ENCODE measurements at regions of chr17 and their contacts with region 1.

Region 1: DNA sequence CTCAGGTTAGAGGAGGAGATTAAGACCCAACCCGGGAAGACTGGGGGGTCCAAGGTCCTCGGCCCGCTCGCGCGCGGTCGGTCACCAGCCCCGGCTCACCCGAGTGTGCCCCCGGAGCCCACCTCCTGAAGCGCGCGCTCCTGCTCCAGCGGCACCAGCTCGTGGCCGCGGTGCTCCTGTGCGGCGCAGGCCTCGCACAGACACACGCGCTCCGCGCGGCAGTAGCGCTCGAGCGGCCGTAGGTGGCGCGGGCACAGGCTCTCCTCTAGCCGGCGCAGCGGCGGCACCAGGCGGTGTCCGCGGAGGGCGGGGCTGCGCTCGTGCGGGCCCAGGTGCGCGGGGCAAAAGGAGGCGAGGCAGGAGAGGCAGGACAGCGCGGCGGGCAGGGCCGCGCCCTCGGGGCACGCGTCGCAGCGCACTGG is 618 bp downstream of the TRIM47 start:
- DNase-seq: peak; percentile 51 to 81 (median 66)
- ATAC-seq: peak; percentile 71
- H3K4me3 Mint-ChIP-seq: peak overlapping the region; percentile 80 to 92 (median 87)
- H3K27ac Mint-ChIP-seq: peak overlapping the region; percentile 65 to 96 (median 92)
- H3K4me1 Mint-ChIP-seq: peaks cover 25 to 57% (median 53%) of the 10 kb centered on the region in 4 donors
- H3K27me3 Mint-ChIP-seq: peaks cover 0 to 2% (median 0%) of the 10 kb centered on the region in 5 donors

Region 2: DNA sequence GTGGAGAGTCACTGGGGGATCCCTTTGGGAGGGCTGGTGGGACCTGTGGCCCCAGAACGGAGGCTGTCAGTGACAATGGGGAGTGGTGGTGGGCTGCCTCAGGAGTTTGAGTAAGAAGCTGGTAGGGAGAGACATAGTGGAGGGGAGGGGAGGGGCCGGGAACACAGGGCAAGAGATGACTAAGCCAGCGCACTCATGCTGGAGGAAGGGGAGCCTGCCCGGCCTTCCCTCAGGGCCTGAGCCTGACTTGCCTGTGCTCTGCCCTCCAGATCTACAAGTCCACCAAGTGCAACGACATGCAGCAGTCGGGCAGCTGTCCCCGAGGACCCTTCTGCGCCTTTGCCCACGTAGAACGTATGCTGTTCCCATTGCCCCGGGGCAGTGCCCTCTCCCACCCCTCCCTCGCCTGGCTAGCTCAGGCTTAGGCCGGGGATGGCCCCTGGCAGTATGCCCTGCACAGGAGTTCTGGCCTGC is 62.8 kb before region 1 on chr17:
- POLR2A ChIA-PET with region 1: no interaction called
- DNase-seq: no peak
- ATAC-seq: no peak
- H3K4me3 Mint-ChIP-seq: no peak overlapping the region
- H3K27ac Mint-ChIP-seq: peak overlapping the region in 2 of 10 donors; percentile 55 to 81
- H3K4me1 Mint-ChIP-seq: peaks cover 0 to 2% (median 0%) of the 10 kb centered on the region in 4 donors
- H3K27me3 Mint-ChIP-seq: no peaks in the 10 kb centered on the region

Region 3: GRCh38 chr17:75889454-75889853 is 11.7 kb after region 1 on chr17:
- POLR2A ChIA-PET with region 1: interaction called, 192 read pairs
- DNase-seq: no peak
- ATAC-seq: peak in 1 of 2 donors; percentile 30
- H3K4me3 Mint-ChIP-seq: no peak overlapping the region
- H3K27ac Mint-ChIP-seq: peak overlapping the region in 2 of 10 donors; percentile 33 to 56
- H3K4me1 Mint-ChIP-seq: peaks cover 8 to 11% (median 10%) of the 10 kb centered on the region in 4 donors
- H3K27me3 Mint-ChIP-seq: no peaks in the 10 kb centered on the region

Region 4: GRCh38 chr17:75896415-75897159 is 18.8 kb after region 1 on chr17 and contains the start of gene TRIM65:
- POLR2A ChIA-PET with region 1: interaction called, 192 read pairs
- DNase-seq: peak; percentile 56 to 84 (median 76)
- ATAC-seq: peak; percentile 84 to 87
- H3K4me3 Mint-ChIP-seq: peak within 1 kb of the TSS; percentile 75 to 87 (median 82)
- H3K27ac Mint-ChIP-seq: peak within 1 kb of the TSS; percentile 77 to 92 (median 86)
- H3K4me1 Mint-ChIP-seq: peaks cover 19 to 28% (median 26%) of the 10 kb centered on the region in 4 donors
- H3K27me3 Mint-ChIP-seq: no peaks in the 10 kb centered on the region
- polyA plus RNA-seq, gene TRIM65: 13.4 to 31.8 (median 18.9) TPM

Region 5: GRCh38 chr17:75904749-75905521 is 27.2 kb after region 1 on chr17 and contains the start of gene MRPL38:
- POLR2A ChIA-PET with region 1: interaction called, 192 read pairs
- DNase-seq: peak; percentile 87 to 96 (median 92)
- ATAC-seq: peak; percentile 95 to 97
- H3K4me3 Mint-ChIP-seq: peak within 1 kb of the TSS; percentile 83 to 94 (median 90)
- H3K27ac Mint-ChIP-seq: peak within 1 kb of the TSS; percentile 85 to 97 (median 95)
- H3K4me1 Mint-ChIP-seq: peaks cover 9 to 29% (median 21%) of the 10 kb centered on the region in 4 donors
- H3K27me3 Mint-ChIP-seq: no peaks in the 10 kb centered on the region
- polyA plus RNA-seq, gene MRPL38: 56.4 to 78.7 (median 64.7) TPM

Measured in naive thymus-derived CD8-positive, alpha-beta T cell (primary cell).